KBM-7 (cell line): ENCODE measurements at regions of chr2 and their contacts with region 1.

Region 1: DNA sequence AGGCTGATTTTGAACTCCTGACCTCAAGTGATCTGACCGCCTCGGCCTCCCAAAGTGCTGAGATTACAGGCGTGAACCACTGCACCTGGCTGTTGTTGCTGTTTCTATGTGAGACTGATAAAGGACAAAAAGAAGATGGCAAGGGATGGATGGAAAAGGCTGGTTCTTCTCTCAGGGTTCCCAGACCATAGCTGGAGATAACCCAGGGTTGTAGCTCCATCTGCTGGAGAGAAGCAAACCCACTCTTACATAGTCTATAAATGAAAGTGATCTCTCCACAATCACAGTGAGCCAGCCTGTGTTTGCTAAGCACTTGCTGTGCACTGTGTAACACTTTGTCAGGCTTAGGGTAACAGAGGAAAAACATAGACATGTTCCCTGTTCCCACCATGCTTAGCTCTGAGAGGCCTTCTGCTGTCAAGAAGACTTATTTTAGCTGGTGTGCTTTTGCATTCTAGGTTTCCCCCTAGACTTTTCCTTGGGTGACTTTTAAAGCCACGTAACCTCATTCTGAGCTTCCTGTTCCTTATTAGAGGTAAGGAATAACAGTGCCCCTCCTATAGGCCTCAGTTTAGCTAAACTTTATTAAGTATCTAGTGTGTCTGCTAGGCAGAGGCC is 49.7 kb downstream of the LIMS1 start:
- DNase-seq: peak; percentile 74

Region 2: GRCh38 chr2:108363031-108363907 is 220.7 kb before region 1 on chr2:
- in situ Hi-C with region 1: loop called (anchors 25 kb)
- DNase-seq: peak; percentile 71

Region 3: DNA sequence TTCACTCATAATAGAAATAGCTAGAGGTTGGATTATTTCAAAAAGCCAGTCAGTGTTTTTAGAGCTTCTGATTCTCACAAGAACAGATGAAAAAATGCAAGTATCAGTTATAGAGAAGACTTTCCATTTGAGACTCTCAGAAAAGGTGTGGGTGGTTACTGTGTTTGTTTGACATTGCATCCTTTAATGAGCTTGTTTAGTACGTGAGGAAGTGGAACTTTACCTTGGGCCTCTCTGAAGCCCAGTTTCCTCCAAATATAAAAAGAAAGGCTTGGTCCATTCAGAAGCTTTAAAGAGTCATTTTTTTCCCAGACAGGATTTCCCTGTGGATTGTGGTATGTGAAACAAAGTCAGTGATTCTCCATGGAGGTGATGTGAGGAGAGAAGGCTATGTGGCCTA is 45.4 kb after region 1 on chr2:
- in situ Hi-C with region 1: no loop called
- DNase-seq: no peak